Endothelial cell of umbilical vein (primary cell): ENCODE measurements at regions of chr22 and their contacts with region 1.

Region 1: DNA sequence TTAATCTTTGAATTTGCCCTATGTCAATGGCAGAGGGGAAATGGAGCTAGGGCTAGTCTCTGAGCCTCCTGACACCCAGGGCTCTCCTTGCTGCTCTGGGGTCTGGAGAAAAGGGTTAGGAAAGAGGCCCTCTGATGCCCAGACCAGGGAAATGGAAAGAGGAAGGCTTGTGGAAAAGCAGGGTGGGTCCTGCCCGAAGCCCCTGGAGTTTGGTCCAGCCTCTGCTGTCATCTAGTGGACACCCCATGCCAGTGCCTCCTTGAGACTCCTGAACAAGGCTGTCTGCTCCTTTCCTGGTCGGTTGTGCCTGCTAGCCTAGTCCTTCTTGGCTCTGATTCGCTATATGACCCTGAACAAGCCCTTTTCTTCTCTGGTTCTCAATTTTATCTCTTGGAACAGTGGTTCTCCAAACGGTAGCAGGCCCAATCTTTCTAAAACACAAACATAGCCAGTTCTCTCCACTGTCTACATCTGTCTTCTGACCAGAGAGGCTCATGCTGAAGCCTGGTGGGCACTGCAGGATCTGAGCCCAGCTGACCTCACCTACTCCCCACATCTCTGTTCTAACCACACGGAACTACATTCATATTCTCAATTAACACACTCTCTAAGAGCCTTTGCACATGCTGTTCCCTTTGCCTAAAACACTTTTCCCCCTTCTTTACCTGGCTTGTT is 8.8 kb upstream of the PLA2G3 start:
- DNase-seq: peak; percentile 84
- H3K4me3 ChIP-seq: no peak overlapping the region
- H3K27ac ChIP-seq: peak overlapping the region; percentile 62
- H3K4me1 ChIP-seq: peaks cover 8% of the 10 kb centered on the region
- H3K27me3 ChIP-seq: no peaks in the 10 kb centered on the region
- CTCF ChIP-seq: peak; percentile 97 to 99
- POLR2A ChIP-seq: no peak

Region 2: DNA sequence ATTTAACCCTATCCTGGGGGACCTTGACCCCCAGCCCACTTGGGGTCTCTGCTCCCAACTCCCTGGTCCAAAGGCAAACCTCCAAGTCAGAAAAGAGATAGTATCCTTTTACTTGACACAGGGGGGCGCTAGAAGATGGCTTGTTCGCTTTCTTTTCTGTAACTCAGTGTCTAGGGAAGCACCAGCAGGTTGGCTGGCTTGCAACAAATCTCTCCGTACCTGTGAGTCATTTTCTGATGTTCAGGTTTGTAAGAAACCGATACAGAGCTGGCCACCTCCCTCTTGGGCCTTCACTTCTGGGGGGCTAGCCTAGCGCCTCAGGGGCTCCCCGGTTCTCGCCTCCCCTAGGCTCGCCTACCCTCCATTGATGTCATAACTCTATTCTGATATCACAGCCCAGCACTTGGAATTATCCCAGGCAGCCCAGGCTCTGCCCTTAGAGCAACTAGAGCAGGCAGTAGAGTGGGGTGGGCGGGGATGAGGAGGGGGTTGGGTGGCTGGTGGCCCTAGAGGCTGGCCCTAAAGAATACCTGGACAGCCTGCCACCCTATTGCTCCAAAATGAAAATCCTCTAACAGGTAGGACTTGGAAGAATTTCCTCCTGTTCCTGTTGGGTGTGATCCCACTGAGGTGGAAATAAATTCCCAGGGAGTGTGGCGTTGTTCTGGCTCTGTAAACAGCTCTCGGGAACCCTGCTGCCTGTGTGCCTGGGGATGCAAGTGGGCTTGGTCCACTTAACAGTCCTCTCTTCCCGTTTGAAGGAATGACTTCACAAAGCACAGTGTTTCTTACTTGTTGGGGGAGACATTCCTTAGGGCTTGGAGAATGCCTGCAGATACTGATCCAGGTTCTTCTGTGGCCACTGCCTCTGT is 385.0 kb before region 1 on chr22:
- CTCF ChIA-PET with region 1: interaction called, 5 read pairs
- POLR2A ChIA-PET with region 1: no interaction called
- dilution Hi-C with region 1: no loop called
- intact Hi-C with region 1: loop called (anchors 1 kb)
- DNase-seq: peak; percentile 77
- H3K4me3 ChIP-seq: no peak overlapping the region
- H3K27ac ChIP-seq: no peak overlapping the region
- H3K4me1 ChIP-seq: no peaks in the 10 kb centered on the region
- H3K27me3 ChIP-seq: no peaks in the 10 kb centered on the region
- CTCF ChIP-seq: peak; percentile 67 to 71
- POLR2A ChIP-seq: no peak

Region 3: DNA sequence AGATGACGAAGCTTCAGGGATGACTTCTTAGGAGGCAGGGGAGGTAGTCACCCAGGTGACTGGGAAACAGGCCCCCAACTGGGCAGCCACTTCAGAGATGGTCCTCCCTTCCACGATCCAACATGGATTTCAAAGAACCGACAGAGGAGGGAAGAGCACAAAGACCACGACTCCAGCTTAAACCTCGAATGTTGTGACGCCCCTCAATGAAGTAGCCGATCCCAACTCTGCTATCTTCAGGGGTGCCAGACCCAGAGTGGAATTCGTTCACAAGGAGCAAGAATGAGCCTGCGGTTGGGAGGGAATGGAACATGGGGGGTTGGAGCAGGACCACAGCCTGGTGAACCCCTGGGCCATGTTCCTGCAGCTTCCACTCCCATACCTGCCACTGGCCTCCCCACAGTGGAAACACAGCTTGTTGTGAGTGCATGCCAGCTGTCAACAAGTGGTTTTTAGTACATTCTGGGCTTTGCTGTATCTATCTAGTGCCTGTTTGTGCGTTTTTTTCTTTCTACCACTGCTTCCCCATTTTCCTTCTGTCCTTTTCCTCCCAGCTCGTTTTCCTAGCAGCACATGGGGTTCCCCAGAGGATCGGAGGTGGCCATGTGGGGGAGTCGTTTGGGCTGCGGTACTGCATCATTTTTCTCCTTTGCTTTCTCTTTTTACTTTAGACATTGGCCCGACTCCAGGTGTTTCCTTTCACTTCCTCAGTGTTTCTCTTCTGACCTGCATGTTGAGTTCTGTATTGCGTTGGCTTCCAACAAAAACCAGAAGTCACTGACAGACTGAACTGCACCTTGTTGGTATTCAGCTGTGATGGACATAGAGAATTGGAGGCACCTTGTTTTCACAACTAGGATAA is 246.4 kb before region 1 on chr22:
- CTCF ChIA-PET with region 1: no interaction called
- POLR2A ChIA-PET with region 1: no interaction called
- dilution Hi-C with region 1: no loop called
- intact Hi-C with region 1: no loop called
- DNase-seq: no peak
- H3K4me3 ChIP-seq: no peak overlapping the region
- H3K27ac ChIP-seq: no peak overlapping the region
- H3K4me1 ChIP-seq: no peaks in the 10 kb centered on the region
- H3K27me3 ChIP-seq: no peaks in the 10 kb centered on the region
- CTCF ChIP-seq: no peak
- POLR2A ChIP-seq: no peak

Region 4: GRCh38 chr22:30947816-30948454 is 201.2 kb before region 1 on chr22:
- CTCF ChIA-PET with region 1: interaction called, 21 read pairs
- POLR2A ChIA-PET with region 1: no interaction called
- dilution Hi-C with region 1: no loop called
- intact Hi-C with region 1: loop called (anchors 1 kb)
- DNase-seq: peak; percentile 63
- H3K4me3 ChIP-seq: no peak overlapping the region
- H3K27ac ChIP-seq: no peak overlapping the region
- H3K4me1 ChIP-seq: no peaks in the 10 kb centered on the region
- H3K27me3 ChIP-seq: no peaks in the 10 kb centered on the region
- CTCF ChIP-seq: peak; percentile 16 to 40
- POLR2A ChIP-seq: no peak

Region 5: DNA sequence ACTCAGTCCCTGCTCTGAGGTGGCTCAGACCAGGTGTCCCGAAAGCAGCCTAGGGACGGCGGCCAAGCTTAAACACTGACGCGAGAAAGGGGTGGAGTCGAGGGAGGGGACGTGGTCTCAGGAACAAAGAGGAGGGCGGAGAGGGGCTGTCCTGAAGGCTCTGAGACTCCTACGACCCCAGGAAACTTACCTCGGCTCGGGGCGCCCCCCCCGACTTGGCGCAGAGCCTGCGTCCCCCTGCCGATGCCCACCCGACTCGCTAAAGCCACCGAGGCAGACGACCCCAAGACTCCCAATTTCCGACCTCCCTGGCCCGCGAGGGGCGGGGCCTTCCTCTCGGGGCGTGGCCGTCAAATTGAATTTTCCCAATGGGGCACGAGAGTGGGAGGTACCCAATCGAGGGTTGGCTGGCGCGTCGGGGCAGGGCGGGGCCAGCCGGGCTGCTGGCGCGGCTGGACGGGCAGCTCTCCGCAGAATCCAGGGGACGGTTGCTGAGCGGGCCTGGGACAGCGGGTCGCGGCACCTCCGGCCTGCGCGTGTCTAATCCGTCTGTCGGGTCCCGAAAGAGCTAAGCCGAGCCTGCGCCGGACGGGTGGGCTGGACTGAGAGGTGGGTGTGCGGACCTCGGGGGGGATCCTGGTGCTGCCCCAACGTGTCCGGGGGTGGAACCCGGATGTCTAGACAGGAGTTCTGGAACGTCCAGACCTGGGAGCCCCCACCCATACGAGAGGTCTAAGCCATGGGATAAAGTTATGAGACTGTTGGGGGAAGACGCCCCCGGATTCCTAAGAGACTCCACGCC is 68.0 kb before region 1 on chr22 and contains the start of gene SMTN:
- CTCF ChIA-PET with region 1: interaction called, 17 read pairs
- POLR2A ChIA-PET with region 1: no interaction called
- dilution Hi-C with region 1: no loop called
- intact Hi-C with region 1: no loop called
- DNase-seq: peak; percentile 96
- H3K4me3 ChIP-seq: peak within 1 kb of the TSS; percentile 47 to 85 (median 65)
- H3K27ac ChIP-seq: peak within 1 kb of the TSS; percentile 96
- H3K4me1 ChIP-seq: peaks cover 33% of the 10 kb centered on the region
- H3K27me3 ChIP-seq: no peaks in the 10 kb centered on the region
- CTCF ChIP-seq: no peak
- POLR2A ChIP-seq: peak; percentile 97
- total RNA-seq, gene SMTN: 197 and 201 TPM in 2 replicates

Region 6: DNA sequence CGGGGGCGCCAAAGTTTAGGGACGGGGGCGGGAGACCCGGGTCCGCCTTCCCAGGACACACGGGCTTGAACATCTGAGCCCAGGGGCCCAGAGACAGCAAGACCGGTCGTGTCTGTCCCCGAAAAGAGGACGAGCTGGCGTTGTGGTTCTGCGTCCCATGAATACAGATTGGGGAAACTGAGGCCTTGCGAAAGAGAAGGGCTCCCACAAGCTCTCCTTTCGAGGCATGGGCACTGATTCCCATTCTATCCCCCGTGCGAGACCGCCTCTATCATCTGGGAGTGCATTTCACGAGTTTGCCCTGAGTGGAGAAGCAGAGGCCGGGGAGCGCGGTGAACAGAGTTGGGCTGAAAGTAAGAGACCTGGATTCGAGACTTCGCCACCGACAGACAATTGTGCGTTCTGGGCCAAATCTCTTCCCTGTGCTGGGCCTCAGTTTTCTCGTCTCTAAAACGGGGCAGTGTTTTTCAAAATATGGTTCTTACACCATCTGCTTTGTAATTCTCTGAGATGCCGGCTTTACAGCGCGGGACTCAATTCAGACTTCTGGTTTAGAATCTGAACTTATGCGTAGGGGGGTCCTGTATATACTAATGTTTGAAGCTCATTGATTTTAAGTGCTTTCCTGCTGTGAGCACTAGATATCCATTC is 11.4 kb after region 1 on chr22:
- CTCF ChIA-PET with region 1: interaction called, 22 read pairs
- POLR2A ChIA-PET with region 1: no interaction called
- dilution Hi-C with region 1: no loop called
- intact Hi-C with region 1: no loop called
- DNase-seq: peak; percentile 55
- H3K4me3 ChIP-seq: peak overlapping the region; percentile 17 to 79 (median 52)
- H3K27ac ChIP-seq: peak overlapping the region; percentile 34
- H3K4me1 ChIP-seq: peaks cover 26% of the 10 kb centered on the region
- H3K27me3 ChIP-seq: no peaks in the 10 kb centered on the region
- CTCF ChIP-seq: no peak
- POLR2A ChIP-seq: no peak